ENCODE measurements at regions of chr4 and their contacts with region 1.

Region 1: DNA sequence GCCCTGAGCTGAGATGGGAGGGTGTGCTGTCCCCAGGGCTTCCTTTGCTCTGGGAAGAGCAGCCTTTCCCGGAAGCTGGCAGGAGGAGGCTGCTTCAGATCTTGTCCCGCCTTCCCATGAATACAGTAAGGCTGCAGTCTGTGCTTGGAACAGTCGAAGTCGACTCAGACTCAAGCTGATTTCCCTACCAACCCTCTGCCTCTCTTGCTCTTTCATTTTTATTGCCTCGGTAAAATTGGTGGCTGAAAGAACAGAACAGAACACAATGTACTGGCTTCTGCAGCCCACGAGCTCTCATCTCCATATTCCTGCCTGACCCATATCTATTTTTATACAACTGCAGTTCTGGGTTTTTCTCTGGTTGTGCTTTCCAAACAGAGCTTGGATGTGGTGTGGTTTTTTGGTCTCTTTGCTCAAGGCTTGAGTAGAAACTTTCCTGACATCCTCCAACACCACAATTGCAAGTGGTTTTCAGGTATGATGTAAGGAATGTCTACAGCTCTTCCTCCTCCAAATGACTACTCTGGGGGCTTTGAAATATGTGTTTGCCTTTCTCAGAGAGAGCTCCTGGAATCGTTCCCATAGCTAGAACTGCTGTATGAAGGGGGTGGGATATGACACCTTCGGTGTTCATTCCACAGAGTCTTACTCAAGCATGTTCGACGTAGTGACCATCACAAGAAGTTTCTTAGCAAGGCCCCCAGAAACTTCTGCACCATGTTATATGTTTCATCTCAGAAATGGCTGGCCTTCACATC is 61.3 kb downstream of the ENPP6 start:
- DNase-seq: no peak
- ATAC-seq: peak; percentile 72 to 83 (median 79)
- H3K4me3 ChIP-seq: no peak overlapping the region
- H3K27ac ChIP-seq: peak overlapping the region in 7 of 12 donors; percentile 11 to 68 (median 32)
- H3K4me1 ChIP-seq: peaks cover 0 to 19% (median 3%) of the 10 kb centered on the region in 12 donors
- H3K27me3 ChIP-seq: no peaks in the 10 kb centered on the region
- CTCF ChIP-seq: no peak
- POLR2A ChIP-seq: no peak

Region 2: DNA sequence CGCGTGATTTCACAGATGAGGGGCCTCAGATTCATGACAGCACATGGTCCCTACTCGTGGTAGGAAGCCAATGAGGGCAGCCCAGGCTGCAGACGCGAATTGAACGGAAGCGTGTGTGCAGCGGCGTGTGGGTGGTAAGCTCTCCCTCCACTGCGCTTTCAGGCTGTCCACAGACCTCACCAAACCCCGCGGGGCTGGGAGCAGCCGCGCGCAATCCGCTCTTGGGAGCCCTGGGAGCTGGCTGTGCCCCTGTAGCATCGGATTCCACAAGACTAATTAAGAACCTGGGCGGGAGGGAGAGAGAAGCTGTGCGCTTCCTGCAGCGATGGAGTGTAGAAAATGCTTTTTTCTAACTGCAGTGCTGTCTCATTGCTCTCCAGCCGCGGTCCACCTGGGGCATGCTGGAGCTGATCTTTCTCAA is 116.4 kb before region 1 on chr4:
- intact Hi-C with region 1: loop called in 1 of 10 experiments (anchors 10 kb)
- DNase-seq: peak; percentile 41 to 64 (median 46)
- ATAC-seq: peak in 3 of 4 donors; percentile 77 to 92 (median 84)
- H3K4me3 ChIP-seq: peak overlapping the region in 10 of 12 donors; percentile 5 to 45 (median 34)
- H3K27ac ChIP-seq: no peak overlapping the region
- H3K4me1 ChIP-seq: peaks cover 0 to 9% (median 0%) of the 10 kb centered on the region in 12 donors
- H3K27me3 ChIP-seq: no peaks in the 10 kb centered on the region
- CTCF ChIP-seq: no peak
- POLR2A ChIP-seq: no peak

Region 3: DNA sequence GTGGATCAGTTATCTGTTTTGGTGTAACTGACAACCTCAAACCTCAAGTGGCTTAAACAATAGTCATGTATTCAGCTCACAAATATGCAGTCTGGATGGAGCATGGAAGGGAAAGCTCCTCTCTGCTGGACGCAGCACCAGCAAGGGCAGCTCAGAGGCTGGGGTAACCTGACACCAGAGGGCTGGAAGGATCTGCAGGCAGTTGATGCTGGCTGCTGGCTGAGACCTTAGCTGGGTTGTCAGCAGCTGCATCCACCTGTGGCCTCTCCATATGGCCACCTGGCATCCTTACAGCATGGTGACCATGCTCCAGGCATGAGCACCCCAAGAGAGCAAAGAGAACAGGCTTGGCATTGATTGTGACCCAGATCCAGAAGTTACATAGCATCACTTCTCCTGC is 14.7 kb after region 1 on chr4:
- intact Hi-C with region 1: no loop called
- DNase-seq: peak in 2 of 5 donors; percentile 32 to 37
- ATAC-seq: peak in 2 of 4 donors; percentile 28 to 64
- H3K4me3 ChIP-seq: no peak overlapping the region
- H3K27ac ChIP-seq: no peak overlapping the region
- H3K4me1 ChIP-seq: peaks cover 0 to 7% (median 1%) of the 10 kb centered on the region in 12 donors
- H3K27me3 ChIP-seq: peaks cover 0 to 17% (median 0%) of the 10 kb centered on the region in 9 donors
- CTCF ChIP-seq: no peak
- POLR2A ChIP-seq: no peak